HEK293T (cell line): ENCODE measurements at regions of chr1 and their contacts with region 1.

Region 1: GRCh38 chr1:93909146-93910050 is at the start of gene GCLM:
- DNase-seq: peak; percentile 97

Region 2: GRCh38 chr1:93878889-93879586 is 30.4 kb before region 1 on chr1 and contains the start of gene DNTTIP2:
- CTCF ChIA-PET with region 1: interaction called, 11 read pairs
- POLR2A ChIA-PET with region 1: interaction called, 16 read pairs
- DNase-seq: peak; percentile 97